B cell (primary cell): ENCODE measurements at regions of chr11 and their contacts with region 1.

Region 1: GRCh38 chr11:62081378-62082291 is 42.2 kb upstream of the INCENP start:
- DNase-seq: peak; percentile 84
- ATAC-seq: peak; percentile 92
- H3K4me3 ChIP-seq: peak overlapping the region in 4 of 5 experiments; percentile 12 to 47 (median 23)
- H3K4me3 Mint-ChIP-seq: peak overlapping the region; percentile 75
- H3K27ac ChIP-seq: no peak overlapping the region
- H3K27ac Mint-ChIP-seq: no peak overlapping the region
- H3K4me1 ChIP-seq: peaks cover 6 to 9% of the 10 kb centered on the region in 2 donors
- H3K4me1 Mint-ChIP-seq: peaks cover 9% of the 10 kb centered on the region
- H3K27me3 ChIP-seq: peaks cover 0 to 3% (median 0%) of the 10 kb centered on the region in 4 experiments
- H3K27me3 Mint-ChIP-seq: no peaks in the 10 kb centered on the region
- CTCF ChIP-seq: peak; percentile 98

Region 2: GRCh38 chr11:61747192-61747966 is 334.3 kb before region 1 on chr11:
- CTCF ChIA-PET with region 1: interaction called, 10 read pairs
- POLR2A ChIA-PET with region 1: no interaction called
- intact Hi-C with region 1: no loop called
- DNase-seq: peak; percentile 60
- ATAC-seq: peak; percentile 48
- H3K4me3 ChIP-seq: no peak overlapping the region
- H3K4me3 Mint-ChIP-seq: no peak overlapping the region
- H3K27ac ChIP-seq: no peak overlapping the region
- H3K27ac Mint-ChIP-seq: no peak overlapping the region
- H3K4me1 ChIP-seq: peaks cover 4 to 5% of the 10 kb centered on the region in 2 donors
- H3K4me1 Mint-ChIP-seq: peaks cover 2% of the 10 kb centered on the region
- H3K27me3 ChIP-seq: peaks cover 0 to 35% (median 13%) of the 10 kb centered on the region in 4 experiments
- H3K27me3 Mint-ChIP-seq: peaks cover 21% of the 10 kb centered on the region
- CTCF ChIP-seq: peak; percentile 76

Region 3: DNA sequence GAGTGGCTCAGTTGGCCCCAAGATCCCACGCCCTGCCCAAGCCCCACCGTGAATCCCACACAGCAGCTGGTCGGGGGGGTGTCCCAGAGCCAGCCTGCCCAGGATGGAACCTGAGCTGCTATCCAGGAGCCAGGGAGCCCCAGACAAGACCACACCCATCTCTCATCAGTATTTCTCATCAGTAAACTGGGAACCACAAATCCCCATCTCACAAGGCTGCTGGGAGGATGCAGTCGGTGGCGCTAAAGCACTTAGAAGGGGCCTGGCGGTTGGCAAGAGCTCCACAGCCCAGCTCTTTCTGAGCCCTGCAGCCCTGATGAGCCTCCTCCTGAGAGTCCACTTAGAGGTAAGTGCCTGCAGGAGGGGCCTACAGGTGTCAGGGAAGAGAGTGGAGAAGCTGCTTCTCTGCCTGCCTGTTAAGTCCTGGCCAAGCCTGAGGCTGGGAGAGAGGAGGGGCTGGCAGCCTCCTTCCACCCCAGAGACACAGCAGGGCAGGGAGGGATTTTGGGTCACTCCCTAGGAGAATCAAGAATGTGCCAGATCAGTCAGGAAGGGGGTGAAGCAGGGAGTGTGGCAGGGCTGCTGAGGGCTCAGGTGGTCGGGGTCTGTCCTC is 196.4 kb before region 1 on chr11:
- CTCF ChIA-PET with region 1: interaction called, 307 read pairs
- POLR2A ChIA-PET with region 1: interaction called, 3 read pairs
- intact Hi-C with region 1: no loop called
- DNase-seq: no peak
- ATAC-seq: no peak
- H3K4me3 ChIP-seq: no peak overlapping the region
- H3K4me3 Mint-ChIP-seq: no peak overlapping the region
- H3K27ac ChIP-seq: no peak overlapping the region
- H3K27ac Mint-ChIP-seq: no peak overlapping the region
- H3K4me1 ChIP-seq: peaks cover 21 to 48% of the 10 kb centered on the region in 2 donors
- H3K4me1 Mint-ChIP-seq: peaks cover 49% of the 10 kb centered on the region
- H3K27me3 ChIP-seq: no peaks in the 10 kb centered on the region
- H3K27me3 Mint-ChIP-seq: no peaks in the 10 kb centered on the region
- CTCF ChIP-seq: no peak

Region 4: GRCh38 chr11:61935861-61936260 is 145.8 kb before region 1 on chr11:
- CTCF ChIA-PET with region 1: interaction called, 15 read pairs
- POLR2A ChIA-PET with region 1: no interaction called
- intact Hi-C with region 1: no loop called
- DNase-seq: no peak
- ATAC-seq: no peak
- H3K4me3 ChIP-seq: no peak overlapping the region
- H3K4me3 Mint-ChIP-seq: no peak overlapping the region
- H3K27ac ChIP-seq: no peak overlapping the region
- H3K27ac Mint-ChIP-seq: no peak overlapping the region
- H3K4me1 ChIP-seq: no peaks in the 10 kb centered on the region
- H3K4me1 Mint-ChIP-seq: no peaks in the 10 kb centered on the region
- H3K27me3 ChIP-seq: peaks cover 0 to 13% (median 5%) of the 10 kb centered on the region in 4 experiments
- H3K27me3 Mint-ChIP-seq: peaks cover 40% of the 10 kb centered on the region
- CTCF ChIP-seq: no peak

Region 5: GRCh38 chr11:61967116-61967923 is 114.3 kb before region 1 on chr11 and contains the start of gene FTH1:
- CTCF ChIA-PET with region 1: interaction called, 61 read pairs
- POLR2A ChIA-PET with region 1: interaction called, 6 read pairs
- intact Hi-C with region 1: loop called (anchors 5 kb)
- DNase-seq: peak; percentile 95
- ATAC-seq: peak; percentile 67
- H3K4me3 ChIP-seq: peak within 1 kb of the TSS; percentile 88 to 99 (median 96)
- H3K4me3 Mint-ChIP-seq: peak within 1 kb of the TSS; percentile 97
- H3K27ac ChIP-seq: peak within 1 kb of the TSS; percentile 86 to 94
- H3K27ac Mint-ChIP-seq: peak within 1 kb of the TSS; percentile 99
- H3K4me1 ChIP-seq: peaks cover 58 to 67% of the 10 kb centered on the region in 2 donors
- H3K4me1 Mint-ChIP-seq: peaks cover 72% of the 10 kb centered on the region
- H3K27me3 ChIP-seq: no peaks in the 10 kb centered on the region
- H3K27me3 Mint-ChIP-seq: no peaks in the 10 kb centered on the region
- CTCF ChIP-seq: no peak
- total RNA-seq, gene FTH1: 1,265 and 1,314 TPM in 2 replicates

Region 6: DNA sequence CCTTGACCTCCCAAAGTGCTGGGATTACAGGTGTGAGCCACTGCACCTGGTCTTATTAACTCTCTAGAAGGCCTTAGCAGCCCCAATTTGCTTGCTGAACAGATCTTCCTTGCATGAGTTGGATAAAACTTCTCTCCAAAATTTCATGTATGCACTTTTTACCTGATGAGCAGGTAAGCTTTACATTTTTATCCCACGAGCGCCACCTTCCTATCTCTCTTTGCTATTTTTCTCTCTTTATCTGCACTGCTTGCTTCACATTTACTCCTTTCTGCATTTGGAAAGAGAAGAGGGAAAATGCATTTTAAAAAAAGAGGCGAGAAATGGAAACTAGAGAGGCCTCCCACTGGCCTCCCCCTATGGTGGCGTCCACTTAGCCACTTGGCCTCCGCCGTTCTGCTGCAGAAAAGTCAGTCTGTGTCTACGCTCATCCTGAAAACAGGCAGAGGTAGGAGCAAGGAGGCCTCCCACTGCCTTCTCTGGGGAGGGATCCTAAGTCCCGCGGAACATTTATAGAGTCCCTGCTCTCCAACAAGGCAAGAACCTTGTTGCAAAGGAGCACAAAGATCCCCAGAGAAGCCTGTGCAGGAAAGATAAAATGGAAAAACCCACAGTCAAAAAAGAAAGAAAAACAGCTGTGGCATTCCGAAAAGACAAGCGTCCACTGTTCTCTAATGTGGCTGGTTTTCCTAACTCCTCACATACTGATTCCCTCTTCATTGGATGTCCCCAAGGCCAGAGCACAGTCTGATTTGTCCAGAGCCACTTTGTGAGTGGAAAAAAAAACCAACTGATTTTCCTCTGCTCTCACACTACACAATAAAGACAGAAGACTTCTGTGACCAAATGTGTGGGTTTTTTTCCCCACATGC is 20.0 kb before region 1 on chr11:
- CTCF ChIA-PET with region 1: interaction called, 13 read pairs
- POLR2A ChIA-PET with region 1: no interaction called
- intact Hi-C with region 1: no loop called
- DNase-seq: no peak
- ATAC-seq: no peak
- H3K4me3 ChIP-seq: no peak overlapping the region
- H3K4me3 Mint-ChIP-seq: no peak overlapping the region
- H3K27ac ChIP-seq: no peak overlapping the region
- H3K27ac Mint-ChIP-seq: no peak overlapping the region
- H3K4me1 ChIP-seq: no peaks in the 10 kb centered on the region
- H3K4me1 Mint-ChIP-seq: no peaks in the 10 kb centered on the region
- H3K27me3 ChIP-seq: no peaks in the 10 kb centered on the region
- H3K27me3 Mint-ChIP-seq: peaks cover 11% of the 10 kb centered on the region
- CTCF ChIP-seq: no peak